ENCODE measurements at regions of chr7 and their contacts with region 1.

Region 1: DNA sequence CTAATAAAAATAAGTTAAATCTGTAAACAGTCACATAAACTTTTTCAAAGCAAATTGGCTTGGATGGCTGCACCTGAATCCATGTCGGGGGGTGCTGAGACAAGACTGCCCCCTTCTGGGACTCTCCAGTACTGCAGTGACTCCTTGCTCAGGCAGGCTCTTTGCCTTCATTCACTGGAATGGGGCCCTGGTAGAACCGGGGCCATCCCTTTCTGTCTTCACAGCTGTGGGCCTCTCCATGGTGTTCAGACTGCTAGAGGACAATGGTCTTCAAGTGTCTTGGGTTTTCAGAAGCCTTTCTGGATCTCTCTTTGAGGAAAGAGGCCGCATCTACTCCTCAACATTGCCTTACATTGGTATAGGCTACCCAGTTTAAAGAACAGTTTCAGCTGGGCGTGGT is 16.1 kb upstream of the IMPDH1 start:
- DNase-seq: peak; percentile 91
- ATAC-seq: peak; percentile 67
- H3K4me3 Mint-ChIP-seq: no peak overlapping the region
- H3K27ac Mint-ChIP-seq: no peak overlapping the region
- H3K4me1 Mint-ChIP-seq: peaks cover 2% of the 10 kb centered on the region; the same call in 1 of the 2 replicates
- H3K27me3 Mint-ChIP-seq: no peaks in the 10 kb centered on the region
- CTCF ChIP-seq: peak; percentile 94

Region 2: DNA sequence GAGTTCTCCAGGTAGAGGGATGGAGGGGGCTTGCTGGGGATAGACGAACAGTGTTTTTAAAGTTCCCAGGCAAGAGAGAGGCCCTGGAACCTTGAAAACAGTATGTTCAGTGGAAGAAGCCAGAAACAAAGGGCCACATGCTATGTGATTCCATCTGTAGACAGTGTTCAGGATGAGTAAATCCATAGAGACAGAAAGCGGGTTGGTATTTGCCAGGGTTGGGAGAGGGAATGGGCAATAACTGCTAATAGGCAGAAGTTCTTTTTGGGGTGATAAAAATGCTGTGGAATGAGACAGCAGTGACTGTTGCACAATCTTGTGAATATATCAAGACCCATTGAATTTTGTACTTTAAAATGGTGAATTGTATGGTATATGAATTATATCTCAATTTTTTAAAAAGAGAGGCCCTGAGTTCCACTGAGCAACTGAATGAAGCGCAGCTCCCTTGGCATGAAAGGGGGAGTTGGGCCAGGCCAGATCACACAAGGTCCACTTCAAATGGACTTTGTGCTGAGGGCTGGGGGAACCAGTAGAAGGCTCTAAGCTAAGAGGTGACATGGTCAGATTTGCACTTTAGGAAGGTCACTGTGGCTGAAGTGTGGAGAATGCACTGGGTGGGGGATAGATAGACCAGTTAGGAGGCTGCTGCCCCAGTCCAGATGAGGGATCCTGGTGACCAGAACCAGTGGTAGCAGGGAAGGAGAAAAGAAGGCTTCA is 150.8 kb before region 1 on chr7:
- CTCF ChIA-PET with region 1: no interaction called
- POLR2A ChIA-PET with region 1: no interaction called
- DNase-seq: no peak
- ATAC-seq: no peak
- H3K4me3 Mint-ChIP-seq: no peak overlapping the region
- H3K27ac Mint-ChIP-seq: no peak overlapping the region
- H3K4me1 Mint-ChIP-seq: peaks cover 23% of the 10 kb centered on the region
- H3K27me3 Mint-ChIP-seq: peaks cover 12% of the 10 kb centered on the region
- CTCF ChIP-seq: no peak

Region 3: GRCh38 chr7:128335734-128336133 is 90.1 kb before region 1 on chr7:
- CTCF ChIA-PET with region 1: no interaction called
- POLR2A ChIA-PET with region 1: no interaction called
- DNase-seq: no peak
- ATAC-seq: no peak
- H3K4me3 Mint-ChIP-seq: no peak overlapping the region
- H3K27ac Mint-ChIP-seq: no peak overlapping the region
- H3K4me1 Mint-ChIP-seq: no peaks in the 10 kb centered on the region
- H3K27me3 Mint-ChIP-seq: no peaks in the 10 kb centered on the region
- CTCF ChIP-seq: no peak

Region 4: DNA sequence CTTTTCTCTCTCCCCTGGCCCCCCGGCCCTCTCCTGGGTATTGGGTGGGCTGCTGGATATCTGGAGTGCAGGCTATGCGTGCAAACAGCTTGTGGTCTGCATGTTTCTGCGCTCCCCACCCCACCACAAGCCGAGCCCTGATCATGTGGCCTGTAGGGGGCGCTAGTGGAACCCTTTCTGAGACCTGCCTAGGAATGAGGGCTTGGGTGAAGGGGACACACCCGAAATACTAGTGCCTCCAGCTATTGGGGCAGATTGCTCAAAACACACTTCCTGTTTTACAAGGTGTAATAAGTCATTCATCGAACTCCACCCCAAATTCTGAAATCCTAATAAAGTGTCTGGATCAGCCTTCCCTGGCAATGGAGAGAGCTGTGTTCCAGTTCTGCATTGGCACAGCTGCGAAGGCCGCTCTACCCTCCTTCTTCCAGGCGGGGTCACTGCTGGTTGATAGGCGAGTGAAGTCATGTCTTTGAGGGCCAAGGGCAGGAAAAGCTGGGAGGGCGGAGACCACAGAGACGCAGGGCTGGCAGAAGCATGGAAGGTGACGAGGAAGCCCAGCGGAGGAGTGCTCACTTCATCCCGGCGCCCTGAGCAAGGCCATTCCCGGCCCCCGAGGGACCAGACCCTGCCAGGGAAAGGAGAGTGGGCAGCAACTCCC is 44.6 kb before region 1 on chr7:
- CTCF ChIA-PET with region 1: interaction called, 31 read pairs
- POLR2A ChIA-PET with region 1: no interaction called
- DNase-seq: peak; percentile 89
- ATAC-seq: peak; percentile 80
- H3K4me3 Mint-ChIP-seq: no peak overlapping the region
- H3K27ac Mint-ChIP-seq: no peak overlapping the region
- H3K4me1 Mint-ChIP-seq: peaks cover 12% of the 10 kb centered on the region
- H3K27me3 Mint-ChIP-seq: peaks cover 9% of the 10 kb centered on the region; the same call in 1 of the 2 replicates
- CTCF ChIP-seq: peak; percentile 94

Region 5: DNA sequence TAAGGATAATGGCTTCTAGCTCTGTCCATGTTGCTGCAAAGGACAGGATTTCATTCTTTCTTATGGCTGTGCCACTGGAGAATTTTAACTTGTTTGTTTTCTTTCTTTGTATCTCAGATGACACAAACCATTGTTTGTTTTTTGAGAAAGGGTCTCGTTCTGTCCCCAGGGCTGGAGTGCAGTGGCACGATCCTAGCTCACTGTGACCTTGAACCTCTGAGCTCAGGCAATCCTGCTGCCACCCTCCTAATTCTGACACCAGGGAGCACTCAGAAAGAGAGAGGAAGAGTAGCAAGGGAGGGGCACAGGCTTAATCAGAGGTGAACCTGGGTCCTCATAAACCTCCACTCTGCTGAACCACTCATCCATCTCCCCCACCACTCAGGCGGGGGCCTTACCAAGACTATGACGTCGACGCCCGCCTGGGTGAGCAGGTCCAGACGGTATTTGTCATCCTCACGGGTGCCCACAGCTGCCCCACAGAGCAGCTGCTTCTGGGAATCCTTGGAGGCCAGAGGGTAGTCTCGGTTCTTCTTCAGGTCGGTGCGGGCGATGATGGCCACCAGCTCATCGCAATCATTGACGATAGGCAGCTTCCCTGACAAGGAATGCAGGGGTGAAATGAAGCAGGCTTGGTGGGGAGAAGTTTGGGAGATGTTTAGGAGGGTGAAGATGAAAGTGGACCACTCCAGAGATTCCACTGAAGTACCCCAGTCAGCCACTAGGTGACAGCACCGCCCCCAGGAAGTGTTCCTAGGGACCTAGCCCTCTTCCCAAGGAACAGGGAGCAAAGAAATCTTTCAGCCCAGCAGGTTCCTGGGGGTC is 27.6 kb before region 1 on chr7:
- CTCF ChIA-PET with region 1: interaction called, 13 read pairs
- POLR2A ChIA-PET with region 1: interaction called, 3 read pairs
- DNase-seq: peak; percentile 84
- ATAC-seq: peak; percentile 90
- H3K4me3 Mint-ChIP-seq: no peak overlapping the region
- H3K27ac Mint-ChIP-seq: no peak overlapping the region
- H3K4me1 Mint-ChIP-seq: no peaks in the 10 kb centered on the region
- H3K27me3 Mint-ChIP-seq: no peaks in the 10 kb centered on the region
- CTCF ChIP-seq: peak; percentile 88

Region 6: DNA sequence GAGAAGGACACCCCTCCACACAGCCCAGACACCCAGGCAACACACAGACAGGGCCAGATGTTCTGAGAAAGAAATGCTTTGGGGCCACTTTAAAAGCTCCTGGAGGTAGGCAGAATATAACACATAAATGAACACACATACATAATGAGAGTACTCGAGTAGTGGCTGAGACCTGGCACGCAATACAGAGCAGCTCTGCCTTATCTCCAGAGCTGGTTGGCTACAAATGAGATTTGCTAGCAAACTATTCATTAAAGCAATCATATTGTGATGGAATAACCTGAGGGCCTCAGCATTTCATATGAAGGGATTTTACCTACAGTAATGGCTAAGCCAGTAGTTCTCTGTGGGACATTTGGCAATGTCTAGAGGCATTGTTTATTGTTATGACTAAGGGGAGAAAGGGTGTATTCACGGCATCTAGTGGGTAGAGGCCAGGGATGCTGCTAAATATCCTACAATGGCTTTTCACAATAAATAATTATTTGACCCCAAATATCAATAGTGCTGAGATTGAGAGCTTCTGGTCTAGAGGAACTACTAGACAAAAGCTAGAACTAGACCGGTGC is 10.5 kb before region 1 on chr7:
- CTCF ChIA-PET with region 1: interaction called, 47 read pairs
- POLR2A ChIA-PET with region 1: no interaction called
- DNase-seq: no peak
- ATAC-seq: no peak
- H3K4me3 Mint-ChIP-seq: no peak overlapping the region
- H3K27ac Mint-ChIP-seq: no peak overlapping the region
- H3K4me1 Mint-ChIP-seq: peaks cover 2% of the 10 kb centered on the region
- H3K27me3 Mint-ChIP-seq: peaks cover 50% of the 10 kb centered on the region
- CTCF ChIP-seq: no peak

Region 7: DNA sequence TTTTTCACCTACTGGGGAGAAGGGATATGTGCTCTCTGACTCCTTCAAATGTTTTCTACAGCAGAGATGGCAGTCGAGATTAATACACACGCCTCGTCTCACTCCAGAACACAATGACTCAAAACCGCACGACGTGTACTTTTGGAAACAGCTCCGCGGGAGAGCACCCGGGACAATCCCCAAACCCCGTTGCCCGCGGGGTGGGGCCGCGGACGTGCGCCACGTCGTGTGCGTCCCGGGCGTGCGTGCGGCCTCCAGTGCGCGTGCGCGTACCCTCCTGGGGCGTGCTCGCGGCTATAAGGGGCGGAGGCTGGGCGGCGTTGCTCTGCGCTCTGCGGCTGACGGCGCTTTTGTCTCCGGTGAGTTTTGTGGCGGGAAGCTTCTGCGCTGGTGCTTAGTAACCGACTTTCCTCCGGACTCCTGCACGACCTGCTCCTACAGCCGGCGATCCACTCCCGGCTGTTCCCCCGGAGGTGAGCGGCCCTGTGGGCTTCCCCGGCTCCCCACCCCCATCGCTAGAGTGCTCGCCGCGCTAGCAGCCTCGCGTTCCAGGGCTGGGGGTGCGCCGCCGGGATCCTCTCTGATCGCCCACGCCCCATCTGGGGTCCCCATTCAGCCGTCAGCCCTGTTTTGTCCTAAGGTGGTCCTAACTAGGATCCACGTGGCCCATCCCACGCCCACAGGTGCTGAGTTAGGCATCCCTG is 29.9 kb after region 1 on chr7 and contains the start of gene HILPDA:
- CTCF ChIA-PET with region 1: interaction called, 199 read pairs
- POLR2A ChIA-PET with region 1: interaction called, 3 read pairs
- DNase-seq: peak; percentile 82
- ATAC-seq: peak; percentile 63
- H3K4me3 Mint-ChIP-seq: peak within 1 kb of the TSS; percentile 95
- H3K27ac Mint-ChIP-seq: peak within 1 kb of the TSS; percentile 92
- H3K4me1 Mint-ChIP-seq: peaks cover 69% of the 10 kb centered on the region
- H3K27me3 Mint-ChIP-seq: peaks cover 12% of the 10 kb centered on the region
- CTCF ChIP-seq: no peak
- total RNA-seq, gene HILPDA: 28.3 to 29.5 TPM (median 28.7 TPM) in 3 replicates

Measured in WTC11 (cell line).